ENCODE measurements at regions of chr7 and their contacts with region 1.

Region 1: DNA sequence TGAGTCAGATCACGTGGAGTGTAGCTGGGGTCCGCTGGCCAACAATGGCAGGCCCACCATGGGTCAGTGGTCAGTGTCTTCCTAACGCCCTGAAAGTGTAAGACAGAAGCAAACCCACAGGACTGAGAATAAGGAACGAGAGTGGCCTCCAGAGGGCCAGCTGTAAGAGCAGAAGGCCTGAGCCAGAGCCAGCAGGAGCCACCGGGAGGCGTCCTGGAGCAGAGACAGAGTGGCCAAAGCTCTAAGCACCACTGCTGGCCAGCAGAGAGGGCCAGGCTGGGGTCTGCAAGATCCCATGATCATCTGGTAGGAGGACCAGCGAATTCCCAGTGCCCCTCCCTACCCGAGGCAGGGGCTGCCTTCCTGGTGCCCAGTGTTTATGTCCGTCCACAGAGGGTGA is 9.2 kb downstream of the CCDC201 start:
- DNase-seq: no peak
- ATAC-seq: no peak
- H3K4me3 ChIP-seq: no peak overlapping the region
- H3K27ac ChIP-seq: no peak overlapping the region
- H3K4me1 ChIP-seq: no peaks in the 10 kb centered on the region
- H3K27me3 ChIP-seq: peaks cover 0 to 18% (median 0%) of the 10 kb centered on the region in 9 donors
- CTCF ChIP-seq: no peak
- POLR2A ChIP-seq: no peak

Region 2: GRCh38 chr7:45663167-45663921 is 200.4 kb before region 1 on chr7:
- intact Hi-C with region 1: loop called in 2 of 10 experiments (anchors 5 to 10 kb)
- DNase-seq: peak in 2 of 5 donors; percentile 26 to 73
- ATAC-seq: peak in 3 of 4 donors; percentile 61 to 68 (median 66)
- H3K4me3 ChIP-seq: no peak overlapping the region
- H3K27ac ChIP-seq: no peak overlapping the region
- H3K4me1 ChIP-seq: no peaks in the 10 kb centered on the region
- H3K27me3 ChIP-seq: no peaks in the 10 kb centered on the region
- CTCF ChIP-seq: peak; percentile 57 to 79 (median 69)
- POLR2A ChIP-seq: no peak

Region 3: GRCh38 chr7:45679516-45679915 is 184.2 kb before region 1 on chr7:
- intact Hi-C with region 1: no loop called
- DNase-seq: peak in 1 of 5 donors; percentile 7
- ATAC-seq: no peak
- H3K4me3 ChIP-seq: no peak overlapping the region
- H3K27ac ChIP-seq: no peak overlapping the region
- H3K4me1 ChIP-seq: peaks cover 0 to 2% (median 0%) of the 10 kb centered on the region in 12 donors
- H3K27me3 ChIP-seq: no peaks in the 10 kb centered on the region
- CTCF ChIP-seq: no peak
- POLR2A ChIP-seq: no peak

Measured in heart left ventricle (tissue), 16 donors.